Caco-2 (cell line): ENCODE measurements at regions of chr10 and their contacts with region 1.

Region 1: DNA sequence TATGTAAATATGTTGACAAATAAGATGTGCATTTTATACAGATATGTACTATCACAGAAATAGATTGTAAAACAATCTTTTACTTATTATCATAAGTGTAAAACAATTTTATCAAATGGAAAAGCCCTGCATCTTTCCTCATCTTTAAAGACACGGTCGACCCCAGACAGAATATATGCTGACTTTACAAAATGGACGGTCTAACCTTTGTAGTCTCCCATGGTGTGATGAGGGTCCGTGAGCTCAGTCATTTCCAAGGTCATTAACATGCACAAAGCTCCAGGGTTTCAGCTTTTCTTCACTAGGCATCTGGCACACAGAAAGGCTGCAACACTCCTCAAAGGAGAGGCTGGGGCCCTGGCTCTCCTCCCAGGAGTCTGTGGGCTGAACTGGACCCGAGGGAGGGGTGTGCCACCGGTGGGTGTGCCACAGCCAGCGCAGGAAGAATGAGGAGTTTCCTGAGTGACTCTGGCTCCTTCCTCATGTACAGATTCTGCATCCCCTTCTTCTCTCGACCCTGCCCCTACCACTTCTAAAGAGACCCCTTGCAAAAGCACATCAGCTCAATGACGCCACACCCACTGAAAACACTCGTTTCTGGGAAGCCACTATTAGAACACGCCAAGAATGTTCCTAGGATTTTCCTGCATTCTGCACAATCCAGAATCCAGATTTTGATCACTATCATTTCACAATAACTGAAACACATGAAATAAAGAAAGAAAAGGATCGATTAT is 26.2 kb upstream of the ABLIM1 start:
- DNase-seq: peak; percentile 42 to 53
- H3K4me3 ChIP-seq: peak overlapping the region; percentile 20
- H3K4me3 Mint-ChIP-seq: peak overlapping the region; percentile 69
- H3K27ac Mint-ChIP-seq: peak overlapping the region; percentile 75
- H3K4me1 ChIP-seq: peaks cover 42% of the 10 kb centered on the region
- H3K4me1 Mint-ChIP-seq: peaks cover 30% of the 10 kb centered on the region
- H3K27me3 ChIP-seq: no peaks in the 10 kb centered on the region
- H3K27me3 Mint-ChIP-seq: no peaks in the 10 kb centered on the region
- CTCF ChIP-seq: no peak

Region 2: DNA sequence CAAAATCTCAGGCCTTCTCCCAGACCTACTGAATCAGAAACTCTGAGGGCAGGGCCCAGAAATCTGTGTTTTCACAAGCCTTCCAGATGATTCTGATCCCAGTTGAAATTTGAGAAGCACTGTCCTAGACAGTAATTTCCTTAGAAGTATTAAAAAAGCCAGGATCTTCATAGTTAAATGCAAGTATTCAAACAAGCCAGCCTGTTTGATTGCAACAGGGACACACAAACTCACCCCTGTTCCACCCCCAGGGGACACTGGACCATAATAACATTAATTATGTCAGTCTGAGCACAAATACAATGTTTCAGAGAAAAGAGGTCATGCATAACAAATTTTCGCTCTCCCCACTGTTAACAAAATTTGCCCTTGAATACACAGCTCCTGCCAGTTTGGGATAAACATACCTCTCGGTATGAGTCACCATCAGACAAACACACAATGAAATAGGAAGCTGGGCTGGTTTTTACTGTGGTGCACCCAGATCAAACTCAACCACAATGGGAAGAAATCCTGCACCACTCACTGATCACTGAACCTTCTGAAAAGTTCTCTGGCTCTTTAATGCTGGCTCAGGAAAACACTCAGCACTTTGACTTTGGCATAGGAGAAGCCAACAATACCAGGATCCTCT is 60.5 kb before region 1 on chr10:
- CTCF ChIA-PET with region 1: no interaction called
- POLR2A ChIA-PET with region 1: no interaction called
- intact Hi-C with region 1: loop called (anchors 2 kb)
- DNase-seq: peak in 1 of 2 experiments; percentile 47
- H3K4me3 ChIP-seq: no peak overlapping the region
- H3K4me3 Mint-ChIP-seq: no peak overlapping the region
- H3K27ac Mint-ChIP-seq: peak overlapping the region; percentile 49
- H3K4me1 ChIP-seq: peaks cover 41% of the 10 kb centered on the region
- H3K4me1 Mint-ChIP-seq: peaks cover 38% of the 10 kb centered on the region
- H3K27me3 ChIP-seq: no peaks in the 10 kb centered on the region
- H3K27me3 Mint-ChIP-seq: no peaks in the 10 kb centered on the region
- CTCF ChIP-seq: no peak

Region 3: GRCh38 chr10:114654849-114655575 is 29.2 kb before region 1 on chr10:
- CTCF ChIA-PET with region 1: interaction called, 5 read pairs
- POLR2A ChIA-PET with region 1: no interaction called
- intact Hi-C with region 1: loop called (anchors 1 kb)
- DNase-seq: peak; percentile 58 to 65
- H3K4me3 ChIP-seq: no peak overlapping the region
- H3K4me3 Mint-ChIP-seq: peak overlapping the region; percentile 37
- H3K27ac Mint-ChIP-seq: peak overlapping the region; percentile 54
- H3K4me1 ChIP-seq: peaks cover 46% of the 10 kb centered on the region
- H3K4me1 Mint-ChIP-seq: peaks cover 26% of the 10 kb centered on the region
- H3K27me3 ChIP-seq: no peaks in the 10 kb centered on the region
- H3K27me3 Mint-ChIP-seq: no peaks in the 10 kb centered on the region
- CTCF ChIP-seq: no peak